ENCODE measurements at regions of chr10 and their contacts with region 1.

Region 1: DNA sequence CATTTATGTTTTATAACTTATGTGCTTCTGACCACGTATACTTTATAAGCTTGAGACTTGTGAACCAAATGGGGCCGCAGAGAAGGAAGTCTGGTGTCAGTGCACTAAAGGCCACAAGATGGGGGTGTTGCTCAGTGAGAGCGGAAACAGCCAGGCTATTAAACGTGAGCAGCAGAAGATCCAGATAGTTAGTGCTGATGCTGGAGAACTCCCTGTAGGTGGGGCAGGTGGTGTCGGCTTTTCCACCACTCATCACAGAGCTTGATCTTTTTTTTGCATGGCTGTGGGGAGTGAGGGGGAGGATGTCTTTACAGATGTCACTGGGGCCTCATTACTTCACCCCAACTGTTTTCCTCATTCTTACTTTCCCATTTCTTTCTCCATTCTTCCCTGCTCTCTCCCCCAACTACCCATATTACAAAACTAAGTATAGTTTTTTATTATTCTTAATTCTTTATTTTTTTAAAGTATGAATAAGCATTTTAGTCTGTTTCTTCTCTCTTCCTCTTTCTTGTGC is 34.7 kb downstream of the ACADSB start:
- DNase-seq: peak; percentile 69
- CTCF ChIP-seq: peak; percentile 79

Region 2: DNA sequence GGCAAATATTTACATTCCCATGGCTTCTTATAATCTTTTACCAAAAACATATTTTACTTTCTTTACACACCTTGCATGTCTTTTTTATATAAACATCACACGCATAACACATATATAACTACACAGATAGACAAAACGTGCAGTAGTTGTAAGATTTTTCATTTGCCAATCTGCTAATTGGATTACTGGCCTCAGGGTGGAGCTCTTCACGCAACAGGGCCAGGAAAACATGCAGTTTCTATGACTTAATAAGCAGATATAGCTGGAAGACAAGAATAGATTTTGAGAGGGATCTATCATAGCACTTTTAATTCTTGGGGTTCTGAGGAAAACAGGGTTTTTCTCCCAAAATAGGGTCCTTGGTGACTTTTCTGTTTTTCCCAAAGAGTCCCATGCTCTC is 21.9 kb before region 1 on chr10:
- CTCF ChIA-PET with region 1: interaction called, 20 read pairs
- POLR2A ChIA-PET with region 1: no interaction called
- DNase-seq: no peak
- CTCF ChIP-seq: peak; percentile 49

Region 3: GRCh38 chr10:123031124-123031523 is 12.3 kb before region 1 on chr10:
- CTCF ChIA-PET with region 1: interaction called, 40 read pairs
- POLR2A ChIA-PET with region 1: no interaction called
- DNase-seq: no peak
- CTCF ChIP-seq: no peak

Region 4: GRCh38 chr10:123132576-123133477 is 89.4 kb after region 1 on chr10:
- CTCF ChIA-PET with region 1: interaction called, 13 read pairs
- POLR2A ChIA-PET with region 1: no interaction called
- DNase-seq: peak; percentile 90
- CTCF ChIP-seq: peak; percentile 97

Region 5: GRCh38 chr10:123559066-123559822 is 515.8 kb after region 1 on chr10:
- CTCF ChIA-PET with region 1: interaction called, 42 read pairs
- POLR2A ChIA-PET with region 1: no interaction called
- DNase-seq: peak; percentile 88
- CTCF ChIP-seq: peak; percentile 100